ENCODE measurements at regions of chr11 and their contacts with region 1.

Region 1: DNA sequence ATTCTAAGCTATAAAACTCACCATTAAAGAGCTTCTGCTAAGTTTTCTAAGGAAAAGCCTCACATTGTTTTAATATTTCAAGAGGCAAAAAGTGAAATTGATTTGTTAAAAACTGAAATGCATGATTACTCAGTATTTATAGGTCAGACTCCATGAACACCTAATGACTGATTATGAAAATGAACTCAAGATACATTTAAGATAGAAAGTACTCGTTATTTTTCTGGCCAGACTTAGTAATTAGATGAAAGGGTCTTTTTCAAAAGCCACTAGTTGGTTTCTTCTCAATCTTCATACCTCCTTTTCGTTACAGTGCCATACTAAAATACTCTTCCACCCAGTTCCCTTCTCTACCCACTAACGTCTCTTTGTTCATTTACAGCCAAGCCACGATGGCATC is 56.3 kb downstream of the VSIG10L2 start:
- DNase-seq: no peak
- ATAC-seq: no peak

Region 2: GRCh38 chr11:125410091-125410490 is 592.1 kb before region 1 on chr11:
- intact Hi-C with region 1: no loop called
- DNase-seq: no peak
- ATAC-seq: no peak

Region 3: DNA sequence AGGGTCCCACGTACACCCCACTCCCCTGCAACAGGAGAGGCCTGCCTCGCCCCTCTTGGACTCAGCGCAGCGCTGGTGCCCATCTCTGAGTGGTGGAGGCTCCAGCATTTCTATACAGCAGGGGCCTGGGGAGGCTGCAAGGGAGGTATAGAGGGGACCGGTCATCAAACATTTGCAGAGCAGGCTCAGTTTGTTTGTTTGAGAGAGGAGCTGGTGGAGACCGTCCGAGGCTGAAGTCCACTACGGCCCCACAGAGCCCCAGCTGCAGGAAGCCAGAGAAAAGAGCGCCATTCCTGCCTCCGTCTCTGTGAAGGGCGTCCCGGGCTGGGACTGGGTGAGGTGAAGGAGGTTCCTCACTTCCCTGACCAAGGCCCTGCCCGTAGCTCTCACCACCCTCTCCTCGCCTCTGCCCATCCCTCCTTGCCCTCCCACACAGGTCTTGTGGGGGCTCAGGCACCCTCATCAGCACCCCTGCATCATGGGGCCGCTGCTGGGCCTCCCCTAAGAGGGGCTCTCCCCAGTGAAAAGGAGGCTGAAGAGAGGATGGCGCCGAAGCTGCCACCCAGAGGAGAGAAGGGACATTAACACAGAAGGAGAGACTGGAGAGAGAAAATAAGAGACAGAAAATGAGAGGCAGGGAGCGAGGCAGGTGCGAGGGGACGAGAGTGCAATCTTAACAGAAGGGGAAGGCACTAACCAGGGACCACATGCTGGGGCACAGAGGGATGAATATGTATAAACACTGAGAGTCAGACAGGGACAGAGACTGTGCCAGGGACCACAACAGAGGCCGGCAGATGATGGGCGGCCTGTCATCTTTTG is 184.7 kb after region 1 on chr11:
- intact Hi-C with region 1: loop called in 1 of 2 experiments (anchors 5 kb)
- DNase-seq: no peak
- ATAC-seq: no peak

Measured in left colon (tissue), 2 donors.